ENCODE measurements at regions of chrX and their contacts with region 1.

Region 1: GRCh38 chrX:132292793-132293192 is 73.5 kb upstream of the RAP2C start:
- DNase-seq: no peak
- ATAC-seq: peak; percentile 59 to 78 (median 62)
- H3K4me3 ChIP-seq: no peak overlapping the region
- H3K27ac ChIP-seq: no peak overlapping the region
- H3K4me1 ChIP-seq: no peaks in the 10 kb centered on the region
- H3K27me3 ChIP-seq: no peaks in the 10 kb centered on the region
- CTCF ChIP-seq: peak; percentile 68

Region 2: GRCh38 chrX:132435222-132435621 is 142.4 kb after region 1 on chrX:
- intact Hi-C with region 1: no loop called
- DNase-seq: no peak
- ATAC-seq: no peak
- H3K4me3 ChIP-seq: no peak overlapping the region
- H3K27ac ChIP-seq: no peak overlapping the region
- H3K4me1 ChIP-seq: no peaks in the 10 kb centered on the region
- H3K27me3 ChIP-seq: no peaks in the 10 kb centered on the region
- CTCF ChIP-seq: no peak

Region 3: DNA sequence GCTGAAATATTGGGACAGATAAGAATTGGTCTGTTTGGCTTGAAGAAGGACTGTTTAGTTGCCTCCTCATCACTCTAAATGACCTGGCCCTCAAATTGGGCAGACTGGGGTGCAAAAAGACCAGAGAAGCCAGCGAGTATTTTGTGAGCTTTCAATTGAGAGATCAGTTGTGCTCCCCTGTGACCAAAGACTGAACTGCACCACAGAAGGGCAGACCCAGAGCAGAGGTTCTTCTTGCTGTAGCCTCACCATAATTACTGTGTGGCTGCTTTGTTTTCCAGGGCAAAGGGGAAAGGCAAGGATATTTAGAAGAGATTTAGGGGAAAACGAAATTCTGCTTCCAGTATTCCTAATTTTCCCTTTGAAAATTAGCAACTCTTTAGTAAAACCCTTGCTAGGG is 300.1 kb after region 1 on chrX:
- intact Hi-C with region 1: loop called in 1 of 2 experiments (anchors 5 kb)
- DNase-seq: no peak
- ATAC-seq: no peak
- H3K4me3 ChIP-seq: no peak overlapping the region
- H3K27ac ChIP-seq: no peak overlapping the region
- H3K4me1 ChIP-seq: no peaks in the 10 kb centered on the region
- H3K27me3 ChIP-seq: peaks cover 0 to 10% (median 0%) of the 10 kb centered on the region in 3 donors
- CTCF ChIP-seq: peak; percentile 31

Region 4: DNA sequence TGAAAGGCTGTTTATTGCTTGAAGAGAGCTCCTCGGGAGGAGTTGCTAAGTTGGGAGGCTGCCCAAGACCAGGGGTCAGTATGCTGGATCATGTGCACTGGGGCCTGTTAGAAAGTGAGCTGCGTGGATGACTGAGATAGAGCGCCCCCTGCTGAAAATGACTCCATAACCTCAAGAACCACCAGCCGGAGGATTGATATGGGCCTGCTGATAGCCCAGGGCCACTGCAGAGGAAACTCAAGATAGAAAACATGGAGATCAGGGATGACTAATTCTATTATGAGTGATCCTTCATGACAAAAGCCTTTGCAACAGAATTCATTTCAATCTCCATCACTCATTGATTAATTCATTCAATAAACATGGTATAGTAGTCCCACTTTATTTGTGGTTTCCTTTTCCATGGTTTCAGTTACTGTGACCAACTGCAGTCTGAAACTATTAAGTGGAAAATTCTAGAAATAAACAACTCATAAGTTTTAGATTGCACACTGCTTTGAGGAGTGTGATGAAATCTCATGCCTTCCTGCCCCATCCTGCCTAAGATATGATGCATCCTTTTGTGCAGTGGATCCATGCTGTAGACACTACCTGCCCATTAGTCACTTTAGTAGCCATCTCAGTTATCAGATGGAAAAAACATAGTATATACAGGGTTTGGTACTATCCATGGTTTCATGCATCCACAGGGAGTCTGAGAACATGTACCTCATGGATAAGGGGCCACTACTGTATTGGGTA is 322.8 kb after region 1 on chrX:
- intact Hi-C with region 1: loop called (anchors 5 kb)
- DNase-seq: no peak
- ATAC-seq: peak in 1 of 4 donors; percentile 46
- H3K4me3 ChIP-seq: no peak overlapping the region
- H3K27ac ChIP-seq: no peak overlapping the region
- H3K4me1 ChIP-seq: no peaks in the 10 kb centered on the region
- H3K27me3 ChIP-seq: peaks cover 0 to 14% (median 0%) of the 10 kb centered on the region in 3 donors
- CTCF ChIP-seq: peak; percentile 33